Sciatic nerve (tissue), 2 donors: ENCODE measurements at regions of chrX and their contacts with region 1.

Region 1: GRCh38 chrX:35699642-35700041 is 98.5 kb upstream of the MAGEB16 start:
- DNase-seq: no peak
- ATAC-seq: no peak

Region 2: GRCh38 chrX:35741142-35741541 is 41.5 kb after region 1 on chrX:
- intact Hi-C with region 1: loop called (anchors 2 kb)
- DNase-seq: no peak
- ATAC-seq: no peak

Region 3: GRCh38 chrX:35800474-35800873 is 100.8 kb after region 1 on chrX:
- intact Hi-C with region 1: no loop called
- DNase-seq: no peak
- ATAC-seq: no peak

Region 4: DNA sequence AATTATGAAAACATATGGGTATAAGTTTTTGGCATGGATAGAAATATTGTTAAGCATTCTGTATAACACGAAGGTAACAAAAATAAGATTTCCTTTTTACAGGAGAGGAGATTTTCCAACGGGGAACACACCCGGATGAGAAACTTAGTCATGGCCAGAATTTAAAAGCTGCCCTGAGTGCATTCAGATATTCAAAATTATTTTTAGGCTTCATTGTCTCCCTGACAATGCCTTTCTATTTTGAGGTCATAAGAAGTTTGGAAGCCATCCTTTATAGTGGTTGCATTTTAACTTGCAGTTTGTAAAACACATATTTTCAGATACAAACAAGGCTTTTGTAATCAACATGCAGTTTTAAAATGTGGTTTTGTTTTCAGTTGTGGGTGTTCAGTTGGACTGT is 951.0 kb after region 1 on chrX:
- intact Hi-C with region 1: no loop called
- DNase-seq: no peak
- ATAC-seq: no peak